CD4-positive, alpha-beta T cell (primary cell): ENCODE measurements at regions of chr12 and their contacts with region 1.

Region 1: DNA sequence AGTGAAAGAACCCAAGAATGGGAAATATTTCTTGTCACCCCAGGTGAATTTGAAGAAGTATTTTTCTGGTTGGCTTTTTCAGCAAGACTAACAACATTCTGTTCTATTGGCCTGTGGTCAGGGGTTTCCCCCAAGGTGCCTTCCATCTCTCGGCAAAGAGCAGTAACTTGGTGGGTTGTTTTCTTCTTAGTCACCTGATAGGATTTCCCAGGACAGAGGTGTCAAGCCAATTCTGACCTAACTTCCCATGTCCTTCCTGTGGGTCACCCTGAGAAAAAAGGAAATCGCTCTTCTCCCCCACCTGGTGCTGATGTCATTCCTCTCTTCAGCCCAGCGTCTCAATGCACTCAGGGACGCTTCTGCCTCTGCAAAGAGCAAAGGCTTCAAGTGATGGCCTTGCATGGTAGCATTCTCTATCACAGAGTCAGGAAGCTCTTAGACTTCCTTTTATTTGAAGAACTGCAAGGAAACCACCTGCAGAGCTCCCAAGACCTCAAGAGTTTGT is 16.1 kb upstream of the IFNG start:
- DNase-seq: peak; percentile 34 to 92 (median 48)
- ATAC-seq: peak; percentile 90
- H3K4me3 ChIP-seq: peak overlapping the region; percentile 43
- H3K4me3 Mint-ChIP-seq: peak overlapping the region; percentile 60
- H3K27ac ChIP-seq: peak overlapping the region; percentile 79 to 86
- H3K27ac Mint-ChIP-seq: peak overlapping the region; percentile 91
- H3K4me1 ChIP-seq: peaks cover 33% of the 10 kb centered on the region
- H3K4me1 Mint-ChIP-seq: peaks cover 63% of the 10 kb centered on the region
- H3K27me3 ChIP-seq: no peaks in the 10 kb centered on the region
- H3K27me3 Mint-ChIP-seq: no peaks in the 10 kb centered on the region
- CTCF ChIP-seq: no peak

Region 2: DNA sequence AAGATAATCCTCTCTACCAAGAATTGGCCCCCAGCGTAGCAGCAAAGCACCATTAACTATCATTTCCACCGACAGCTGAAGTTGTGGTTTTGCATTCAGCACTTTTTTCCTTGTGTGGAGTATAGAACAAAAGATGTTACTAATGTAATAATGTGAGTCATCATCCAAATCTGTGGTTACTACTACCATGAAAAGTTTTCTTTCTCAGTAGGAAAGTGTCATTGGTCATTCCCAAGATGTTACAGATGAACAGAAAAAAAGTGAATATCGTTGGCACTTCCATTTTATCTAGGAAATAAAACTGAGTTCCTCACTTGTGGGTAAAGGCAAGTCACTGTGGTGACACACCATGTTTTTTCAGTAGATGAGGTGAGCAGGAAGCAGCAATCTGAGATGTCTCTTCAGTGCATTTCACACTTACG is 14.2 kb after region 1 on chr12:
- CTCF ChIA-PET with region 1: no interaction called
- POLR2A ChIA-PET with region 1: interaction called, 15 read pairs
- intact Hi-C with region 1: loop called in 1 of 2 experiments (anchors 2 kb)
- DNase-seq: peak in 7 of 14 experiments; percentile 9 to 75 (median 44)
- ATAC-seq: peak; percentile 83
- H3K4me3 ChIP-seq: no peak overlapping the region
- H3K4me3 Mint-ChIP-seq: peak overlapping the region; percentile 32
- H3K27ac ChIP-seq: peak overlapping the region in 1 of 2 donors; percentile 39
- H3K27ac Mint-ChIP-seq: peak overlapping the region; percentile 60
- H3K4me1 ChIP-seq: no peaks in the 10 kb centered on the region
- H3K4me1 Mint-ChIP-seq: peaks cover 20% of the 10 kb centered on the region
- H3K27me3 ChIP-seq: no peaks in the 10 kb centered on the region
- H3K27me3 Mint-ChIP-seq: no peaks in the 10 kb centered on the region
- CTCF ChIP-seq: no peak

Region 3: GRCh38 chr12:68236421-68237059 is 60.9 kb after region 1 on chr12:
- CTCF ChIA-PET with region 1: no interaction called
- POLR2A ChIA-PET with region 1: interaction called, 3 read pairs
- intact Hi-C with region 1: loop called in 1 of 2 experiments (anchors 2 kb)
- DNase-seq: peak; percentile 4 to 85 (median 14)
- ATAC-seq: peak; percentile 79
- H3K4me3 ChIP-seq: peak overlapping the region; percentile 56
- H3K4me3 Mint-ChIP-seq: peak overlapping the region; percentile 92
- H3K27ac ChIP-seq: peak overlapping the region; percentile 0 to 50
- H3K27ac Mint-ChIP-seq: peak overlapping the region; percentile 89
- H3K4me1 ChIP-seq: peaks cover 29% of the 10 kb centered on the region
- H3K4me1 Mint-ChIP-seq: peaks cover 61% of the 10 kb centered on the region
- H3K27me3 ChIP-seq: no peaks in the 10 kb centered on the region
- H3K27me3 Mint-ChIP-seq: no peaks in the 10 kb centered on the region
- CTCF ChIP-seq: no peak

Region 4: GRCh38 chr12:68331869-68332727 is 156.5 kb after region 1 on chr12 and contains the start of gene MDM1:
- CTCF ChIA-PET with region 1: no interaction called
- POLR2A ChIA-PET with region 1: interaction called, 4 read pairs
- intact Hi-C with region 1: loop called in 1 of 2 experiments (anchors 5 kb)
- DNase-seq: peak; percentile 85 to 99 (median 94)
- ATAC-seq: peak; percentile 96
- H3K4me3 ChIP-seq: peak within 1 kb of the TSS; percentile 66
- H3K4me3 Mint-ChIP-seq: peak within 1 kb of the TSS; percentile 91
- H3K27ac ChIP-seq: peak within 1 kb of the TSS; percentile 30 to 66
- H3K27ac Mint-ChIP-seq: peak within 1 kb of the TSS; percentile 84
- H3K4me1 ChIP-seq: peaks cover 25% of the 10 kb centered on the region
- H3K4me1 Mint-ChIP-seq: peaks cover 59% of the 10 kb centered on the region
- H3K27me3 ChIP-seq: no peaks in the 10 kb centered on the region
- H3K27me3 Mint-ChIP-seq: no peaks in the 10 kb centered on the region
- CTCF ChIP-seq: no peak
- total RNA-seq, gene MDM1: 11.0 to 11.6 TPM